ENCODE measurements at regions of chr17 and their contacts with region 1.

Region 1: GRCh38 chr17:35460354-35460851 is 11.8 kb upstream of the SLFN13 start:
- DNase-seq: peak; percentile 76
- ATAC-seq: peak; percentile 96
- H3K4me3 ChIP-seq: peak overlapping the region; percentile 56
- H3K27ac ChIP-seq: no peak overlapping the region
- H3K4me1 ChIP-seq: peaks cover 9% of the 10 kb centered on the region
- H3K27me3 ChIP-seq: peaks cover 7% of the 10 kb centered on the region; the same call in 1 of the 2 replicates
- CTCF ChIP-seq: no peak

Region 2: DNA sequence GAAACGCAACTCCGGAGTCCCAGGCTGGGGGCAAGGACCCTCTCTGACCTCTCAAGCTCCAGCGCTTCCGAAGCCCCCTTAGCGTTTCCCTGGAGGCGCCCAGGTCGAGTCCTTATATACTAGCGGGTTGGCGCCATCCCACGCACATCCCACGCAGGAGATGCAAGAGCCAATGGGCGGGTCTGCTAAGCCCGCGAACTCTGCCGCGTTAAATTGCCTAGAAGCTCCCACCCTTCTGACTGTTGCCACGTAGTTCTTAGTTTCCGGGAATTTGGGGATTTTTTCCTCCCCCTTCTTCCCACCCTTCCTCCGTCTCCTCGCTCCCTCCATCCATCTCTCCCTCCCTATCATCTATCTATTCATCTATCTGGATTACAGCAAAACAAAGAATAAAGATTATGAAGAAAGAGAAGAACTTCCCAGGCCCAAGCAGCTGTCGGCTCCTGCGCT is 86.8 kb before region 1 on chr17 and contains the start of gene SLFN11:
- CTCF ChIA-PET with region 1: no interaction called
- POLR2A ChIA-PET with region 1: no interaction called
- intact Hi-C with region 1: loop called (anchors 5 kb)
- DNase-seq: peak; percentile 53
- ATAC-seq: peak; percentile 80
- H3K4me3 ChIP-seq: peak within 1 kb of the TSS; percentile 78
- H3K27ac ChIP-seq: peak within 1 kb of the TSS; percentile 9; the same call in 1 of the 2 replicates
- H3K4me1 ChIP-seq: no peaks in the 10 kb centered on the region
- H3K27me3 ChIP-seq: no peaks in the 10 kb centered on the region
- CTCF ChIP-seq: no peak
- total RNA-seq, gene SLFN11: 7.5 and 13.9 TPM in 2 replicates

Region 3: DNA sequence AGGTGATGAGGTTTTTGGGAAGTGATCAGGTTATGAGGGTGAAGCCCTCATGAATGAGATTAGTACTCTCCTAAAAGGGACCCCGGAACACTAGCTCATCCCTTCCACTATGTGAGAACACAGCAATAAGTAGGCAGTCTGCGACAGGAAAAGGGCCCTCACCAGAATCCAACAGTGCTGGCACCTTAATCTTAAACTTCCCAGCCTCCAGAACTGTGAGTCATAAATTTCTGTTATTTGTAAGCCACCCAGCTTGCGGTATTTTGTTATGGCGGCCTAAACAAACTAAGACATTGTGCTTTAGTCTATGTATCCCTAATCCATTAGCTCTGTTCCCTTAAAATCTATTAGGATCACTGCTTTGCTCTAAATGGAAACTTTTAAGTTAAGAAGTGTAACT is 36.6 kb before region 1 on chr17:
- CTCF ChIA-PET with region 1: no interaction called
- POLR2A ChIA-PET with region 1: no interaction called
- intact Hi-C with region 1: no loop called
- DNase-seq: no peak
- ATAC-seq: no peak
- H3K4me3 ChIP-seq: no peak overlapping the region
- H3K27ac ChIP-seq: no peak overlapping the region
- H3K4me1 ChIP-seq: no peaks in the 10 kb centered on the region
- H3K27me3 ChIP-seq: no peaks in the 10 kb centered on the region
- CTCF ChIP-seq: no peak

Region 4: GRCh38 chr17:35448214-35448898 is 12.0 kb before region 1 on chr17 and contains the start of gene SLFN13:
- CTCF ChIA-PET with region 1: no interaction called
- POLR2A ChIA-PET with region 1: no interaction called
- intact Hi-C with region 1: loop called (anchors 1 kb)
- DNase-seq: peak; percentile 68
- ATAC-seq: peak; percentile 90
- H3K4me3 ChIP-seq: peak within 1 kb of the TSS; percentile 74
- H3K27ac ChIP-seq: peak within 1 kb of the TSS; percentile 36; the same call in 1 of the 2 replicates
- H3K4me1 ChIP-seq: 0 out of 2 replicates have a peak, but pooled peaks cover 4% of the 10 kb centered on the region
- H3K27me3 ChIP-seq: no peaks in the 10 kb centered on the region
- CTCF ChIP-seq: no peak
- total RNA-seq, gene SLFN13: 4.6 and 8.2 TPM in 2 replicates